Posterior vena cava (tissue), 2 donors: ENCODE measurements at regions of chr16 and their contacts with region 1.

Region 1: DNA sequence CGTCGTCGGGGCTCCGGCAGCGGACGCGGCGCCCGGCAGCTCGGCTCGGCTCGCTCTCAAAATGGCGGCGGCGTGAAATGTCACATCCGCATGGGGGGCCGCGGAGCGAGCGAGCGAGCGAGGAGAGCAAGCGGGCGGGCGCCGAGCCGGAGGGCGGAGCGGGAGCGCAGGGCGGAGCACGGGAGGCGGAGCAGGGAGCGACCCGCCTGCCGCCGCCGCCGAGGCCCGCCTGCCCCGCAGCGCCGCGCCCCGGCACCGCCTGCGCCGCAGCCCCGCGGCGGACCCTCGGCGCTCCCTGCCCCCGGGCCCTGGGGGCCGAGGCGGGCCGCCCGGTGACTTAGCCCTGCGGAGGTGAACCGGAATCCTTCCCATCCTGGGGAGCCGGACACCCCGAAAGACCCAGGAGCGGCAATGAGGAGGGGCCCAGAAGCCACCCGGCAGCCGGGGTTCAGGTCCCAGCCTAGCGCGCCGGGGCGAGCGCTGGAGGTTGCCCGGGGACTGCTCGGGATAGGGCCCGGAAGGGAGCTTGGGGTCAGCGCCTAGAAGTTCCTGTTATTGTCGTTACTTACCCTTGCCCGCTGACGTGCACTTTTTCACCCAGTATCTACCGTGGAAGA is at the start of gene USP7:
- DNase-seq: peak; percentile 98
- total RNA-seq, gene USP7: 72.2 to 82.7 TPM

Region 2: GRCh38 chr16:8998114-8998513 is 34.2 kb after region 1 on chr16:
- intact Hi-C with region 1: loop called in 1 of 2 experiments (anchors 1 kb)
- DNase-seq: no peak

Region 3: DNA sequence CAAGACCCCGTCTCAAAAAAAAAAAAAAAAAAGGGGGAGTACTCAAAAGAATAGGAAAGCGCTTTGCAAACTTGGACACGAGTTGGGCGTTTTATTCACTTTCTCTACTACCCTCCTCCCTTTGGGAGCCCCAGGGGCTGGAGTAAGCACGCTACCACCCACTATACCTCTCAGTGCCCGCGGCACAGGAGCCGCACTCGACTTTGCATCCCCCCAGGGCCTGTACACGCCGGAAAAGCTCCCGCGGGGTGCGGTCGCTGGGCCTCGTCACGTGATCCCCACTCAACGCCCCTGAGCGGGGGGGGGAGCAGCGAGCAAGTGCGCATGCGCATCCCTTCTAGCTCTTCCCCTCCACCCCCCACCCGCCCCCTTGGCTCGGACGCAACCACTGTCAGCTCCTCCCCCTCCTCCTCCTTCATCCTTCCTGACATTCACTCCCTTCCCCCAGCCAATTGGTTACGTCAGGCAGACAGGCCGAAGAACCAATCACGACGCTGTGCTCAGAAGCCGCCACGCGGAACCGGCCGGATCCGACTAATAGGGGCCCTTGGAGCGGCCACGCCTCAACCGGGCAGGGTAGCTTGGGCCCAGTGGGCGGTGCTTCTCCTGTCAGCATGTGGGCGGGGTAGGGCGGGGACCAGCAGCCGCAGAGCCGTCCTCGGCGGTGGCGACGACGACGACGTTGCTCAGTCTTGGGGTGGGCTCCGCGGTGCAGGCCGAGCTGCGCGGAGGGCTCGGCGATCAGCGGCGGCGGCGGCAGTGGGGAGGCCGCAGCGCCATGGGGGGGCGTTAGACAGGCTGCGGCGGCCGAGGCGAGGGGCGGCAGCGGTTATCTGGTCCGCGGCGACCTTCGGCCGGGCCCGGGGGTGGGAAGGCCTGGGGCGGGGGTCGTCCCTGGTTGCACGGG is 127.3 kb after region 1 on chr16 and contains the start of gene HAPSTR1:
- intact Hi-C with region 1: loop called in 1 of 2 experiments (anchors 10 kb)
- DNase-seq: peak; percentile 100
- total RNA-seq, gene HAPSTR1: 63.9 to 65.7 TPM